Heart left ventricle (tissue), 16 donors: ENCODE measurements at regions of chr15 and their contacts with region 1.

Region 1: DNA sequence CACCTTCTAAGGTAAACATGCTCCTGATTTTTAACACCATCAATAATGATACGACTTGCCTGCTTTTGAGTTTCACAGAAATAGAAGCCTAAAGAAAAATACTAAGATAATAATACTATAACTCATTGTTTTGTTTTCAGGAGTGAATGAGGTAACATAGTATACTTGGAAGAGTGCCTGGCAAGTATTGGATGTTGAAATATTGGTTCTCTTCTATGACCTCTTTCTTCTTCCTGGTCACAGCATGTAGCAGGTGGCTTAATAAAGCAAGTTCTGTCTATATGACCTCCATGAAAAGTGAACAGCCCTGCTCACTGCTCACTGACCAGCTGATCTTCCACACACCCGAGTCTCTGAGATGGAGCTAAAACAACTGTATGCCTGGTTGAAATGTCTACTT is 312.3 kb upstream of the ONECUT1 start:
- DNase-seq: no peak
- ATAC-seq: no peak
- H3K4me3 ChIP-seq: no peak overlapping the region
- H3K27ac ChIP-seq: no peak overlapping the region
- H3K4me1 ChIP-seq: no peaks in the 10 kb centered on the region
- H3K27me3 ChIP-seq: no peaks in the 10 kb centered on the region
- CTCF ChIP-seq: no peak
- POLR2A ChIP-seq: no peak

Region 2: DNA sequence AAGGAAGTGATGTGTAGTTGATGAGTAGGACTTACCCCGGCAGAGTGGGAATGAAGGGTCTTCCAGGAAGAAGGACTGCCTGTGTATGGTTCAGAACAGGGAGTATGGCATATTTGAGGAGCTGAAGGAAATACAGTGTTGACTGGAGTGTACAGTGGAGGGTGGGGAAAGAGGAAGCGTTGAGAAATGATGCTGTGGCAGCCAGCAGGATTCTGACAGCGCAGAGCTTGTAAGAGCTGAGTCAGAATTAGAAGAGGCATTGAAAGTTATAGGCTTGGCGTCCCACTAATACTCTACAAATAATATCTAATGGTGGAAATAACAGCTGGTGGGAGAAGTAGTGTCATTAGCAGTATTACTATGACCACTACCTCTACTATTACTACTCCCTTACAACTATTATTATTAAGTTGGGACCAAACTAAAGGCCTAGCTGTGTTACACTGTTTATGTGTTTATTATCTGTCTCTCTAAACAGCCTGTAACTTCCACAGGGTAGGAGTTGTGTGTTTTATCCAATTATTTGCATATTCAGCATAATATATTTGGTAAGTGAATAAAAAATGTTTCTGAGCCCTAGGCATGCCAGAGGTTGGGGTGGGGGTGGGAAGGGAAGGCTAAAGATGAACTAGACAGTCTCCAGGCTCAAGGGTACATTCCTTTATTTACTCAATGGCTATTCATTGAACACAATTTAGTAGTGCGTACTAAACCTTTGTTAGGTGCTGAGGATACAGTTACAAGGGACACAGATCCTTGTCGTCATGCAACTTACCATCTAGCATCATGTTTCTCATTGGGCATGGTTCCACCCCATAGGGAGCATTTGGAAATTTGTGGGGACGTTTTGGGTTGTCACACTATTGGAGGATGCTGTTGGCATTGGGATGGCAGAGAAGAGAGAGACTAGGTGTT is 116.4 kb after region 1 on chr15:
- intact Hi-C with region 1: loop called in 1 of 10 experiments (anchors 5 kb)
- DNase-seq: no peak
- ATAC-seq: no peak
- H3K4me3 ChIP-seq: no peak overlapping the region
- H3K27ac ChIP-seq: no peak overlapping the region
- H3K4me1 ChIP-seq: no peaks in the 10 kb centered on the region
- H3K27me3 ChIP-seq: peaks cover 0 to 10% (median 0%) of the 10 kb centered on the region in 9 donors
- CTCF ChIP-seq: no peak
- POLR2A ChIP-seq: no peak

Region 3: DNA sequence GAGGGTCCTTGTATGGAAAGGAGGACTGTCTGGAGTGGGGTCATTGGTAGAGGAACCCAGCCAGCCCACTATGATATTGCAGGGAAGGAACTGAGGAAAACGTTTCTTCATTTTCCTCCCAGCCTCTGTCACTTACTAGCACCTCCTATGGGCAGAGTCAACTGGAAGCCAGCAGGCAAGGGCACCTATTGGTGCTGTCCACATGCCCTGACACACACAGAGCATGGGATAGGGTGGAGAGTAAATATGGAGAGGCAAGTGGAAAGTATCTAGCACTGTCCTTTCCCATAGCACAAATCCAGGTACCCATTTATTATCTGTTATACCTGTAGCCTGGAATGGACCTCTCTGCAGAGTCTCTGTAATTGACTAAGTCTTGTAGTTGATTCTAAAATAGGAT is 371.4 kb after region 1 on chr15:
- intact Hi-C with region 1: no loop called
- DNase-seq: no peak
- ATAC-seq: no peak
- H3K4me3 ChIP-seq: no peak overlapping the region
- H3K27ac ChIP-seq: no peak overlapping the region
- H3K4me1 ChIP-seq: no peaks in the 10 kb centered on the region
- H3K27me3 ChIP-seq: peaks cover 0 to 3% (median 0%) of the 10 kb centered on the region in 9 donors
- CTCF ChIP-seq: no peak
- POLR2A ChIP-seq: no peak